BJ (cell line): ENCODE measurements at regions of chr1 and their contacts with region 1.

Region 1: GRCh38 chr1:20212685-20213331 is 26.5 kb upstream of the PLA2G2C start:
- DNase-seq: no peak
- H3K4me3 ChIP-seq: no peak overlapping the region
- H3K27me3 ChIP-seq: peaks cover 5% of the 10 kb centered on the region
- CTCF ChIP-seq: peak; percentile 84

Region 2: GRCh38 chr1:20069874-20070273 is 142.9 kb before region 1 on chr1 and contains the start of gene PLA2G5:
- CTCF ChIA-PET with region 1: no interaction called
- POLR2A ChIA-PET with region 1: no interaction called
- DNase-seq: no peak
- H3K4me3 ChIP-seq: no peak within 1 kb of the TSS
- H3K27me3 ChIP-seq: no peaks in the 10 kb centered on the region; the same call in 1 of the 2 replicates
- CTCF ChIP-seq: no peak
- polyA plus RNA-seq, gene PLA2G5: not detected in 2 replicates

Region 3: GRCh38 chr1:20200966-20201365 is 11.8 kb before region 1 on chr1:
- CTCF ChIA-PET with region 1: interaction called, 23 read pairs
- POLR2A ChIA-PET with region 1: no interaction called
- DNase-seq: no peak
- H3K4me3 ChIP-seq: no peak overlapping the region
- H3K27me3 ChIP-seq: peaks cover 5% of the 10 kb centered on the region; the same call in 1 of the 2 replicates
- CTCF ChIP-seq: no peak

Region 4: DNA sequence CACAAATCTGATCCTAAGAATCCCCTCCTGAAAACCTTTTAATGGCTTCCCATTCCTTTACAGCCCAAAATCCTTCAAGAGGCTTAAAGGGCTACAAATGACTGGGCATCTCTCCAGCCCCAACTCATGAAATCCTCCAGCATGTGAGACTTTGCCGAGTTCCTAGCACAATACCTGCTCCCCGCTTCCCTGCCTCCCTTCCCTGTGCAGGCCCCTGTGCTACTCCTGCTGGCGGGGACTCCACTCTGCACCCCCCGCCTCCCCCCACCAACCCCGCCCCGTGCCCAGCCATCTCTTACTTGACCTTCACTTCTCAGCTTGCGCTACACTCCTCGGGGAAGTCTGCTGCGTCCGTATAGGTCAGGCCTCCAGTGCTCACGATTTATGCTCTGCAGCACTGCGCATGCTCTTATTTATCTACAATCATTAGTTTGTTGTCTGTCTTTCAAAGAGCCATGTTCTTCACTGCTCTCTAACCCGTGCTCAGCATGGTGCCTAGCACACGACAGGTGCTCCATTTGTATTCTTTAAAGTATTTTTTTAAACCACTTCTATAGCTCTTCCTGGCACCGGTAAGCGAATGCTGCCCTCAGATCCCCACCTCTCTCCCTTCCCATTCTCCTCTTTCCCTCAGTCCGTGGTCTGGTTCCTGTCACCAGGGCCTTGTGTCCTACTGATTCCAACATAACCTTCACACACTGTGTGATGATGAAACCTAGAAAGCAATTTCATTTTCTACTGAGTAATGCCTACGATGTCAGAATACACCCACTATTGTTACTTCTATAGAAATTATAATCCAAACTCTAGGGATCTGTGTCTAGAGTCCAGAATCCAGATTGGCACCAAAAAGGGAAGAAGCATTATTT is 11.0 kb after region 1 on chr1:
- CTCF ChIA-PET with region 1: interaction called, 12 read pairs
- POLR2A ChIA-PET with region 1: no interaction called
- DNase-seq: no peak
- H3K4me3 ChIP-seq: no peak overlapping the region
- H3K27me3 ChIP-seq: peaks cover 6% of the 10 kb centered on the region; the same call in 1 of the 2 replicates
- CTCF ChIP-seq: no peak